ENCODE measurements at regions of chrX and their contacts with region 1.

Region 1: GRCh38 chrX:132488819-132489577 is at the start of gene MBNL3:
- DNase-seq: peak; percentile 35 to 78 (median 70)
- ATAC-seq: peak; percentile 77
- H3K4me3 ChIP-seq: peak within 1 kb of the TSS; percentile 82
- H3K4me3 Mint-ChIP-seq: peak within 1 kb of the TSS; percentile 93 to 99 (median 96)
- H3K27ac ChIP-seq: peak within 1 kb of the TSS; percentile 83
- H3K27ac Mint-ChIP-seq: peak within 1 kb of the TSS; percentile 78 to 98 (median 94)
- H3K4me1 ChIP-seq: peaks cover 4 to 15% of the 10 kb centered on the region in 2 donors
- H3K4me1 Mint-ChIP-seq: peaks cover 16 to 59% (median 44%) of the 10 kb centered on the region in 7 donors
- H3K27me3 ChIP-seq: no peaks in the 10 kb centered on the region
- H3K27me3 Mint-ChIP-seq: peaks cover 0 to 10% (median 0%) of the 10 kb centered on the region in 5 donors
- total RNA-seq, gene MBNL3: 20.8 to 34.0 (median 29.7) TPM

Region 2: DNA sequence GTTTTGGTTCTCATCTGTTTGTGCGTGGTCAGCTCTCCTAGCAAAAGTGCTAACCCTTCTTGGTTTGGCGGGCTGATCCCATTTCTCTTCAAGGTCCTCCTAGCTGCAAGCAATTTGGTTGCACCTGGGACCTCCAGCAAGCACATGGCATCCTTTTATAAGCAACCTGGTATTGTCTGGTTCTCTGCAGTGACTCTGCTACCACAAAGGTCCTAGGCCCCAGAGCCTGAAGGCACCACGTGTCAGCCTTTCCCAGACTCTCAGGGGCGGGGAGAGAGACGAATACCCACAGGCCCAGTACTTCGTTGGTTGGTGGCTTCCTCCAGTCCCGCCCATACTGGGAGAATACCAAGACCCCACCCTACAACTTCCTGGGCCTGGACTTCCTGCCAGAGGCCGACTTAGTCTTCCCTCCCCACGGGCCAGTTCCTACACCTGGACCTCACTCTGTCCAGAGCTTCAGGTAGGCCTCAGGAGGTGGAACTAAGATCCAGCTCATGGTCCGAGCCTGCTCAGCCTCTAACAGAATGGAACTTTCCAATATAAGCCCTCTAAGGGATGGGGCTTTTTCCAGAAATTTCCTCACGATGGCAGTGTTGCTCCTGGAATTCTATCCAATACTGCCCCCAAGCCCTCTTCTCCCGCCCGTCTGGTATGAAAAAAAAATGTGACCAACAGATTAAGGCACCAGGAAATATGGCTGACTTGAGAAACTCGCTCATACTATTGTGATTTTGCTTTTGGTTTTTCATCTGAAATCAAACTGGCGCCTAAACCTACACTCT is 658.4 kb before region 1 on chrX:
- CTCF ChIA-PET with region 1: interaction called, 3 read pairs
- POLR2A ChIA-PET with region 1: no interaction called
- intact Hi-C with region 1: loop called (anchors 2 to 5 kb)
- DNase-seq: peak in 8 of 9 donors; percentile 59 to 83 (median 72)
- ATAC-seq: peak; percentile 76
- H3K4me3 ChIP-seq: peak overlapping the region; percentile 37
- H3K4me3 Mint-ChIP-seq: peak overlapping the region; percentile 61 to 90 (median 72)
- H3K27ac ChIP-seq: peak overlapping the region; percentile 55
- H3K27ac Mint-ChIP-seq: peak overlapping the region; percentile 42 to 91 (median 81)
- H3K4me1 ChIP-seq: peaks cover 0 to 14% of the 10 kb centered on the region in 2 donors
- H3K4me1 Mint-ChIP-seq: peaks cover 1 to 44% (median 35%) of the 10 kb centered on the region in 7 donors
- H3K27me3 ChIP-seq: no peaks in the 10 kb centered on the region
- H3K27me3 Mint-ChIP-seq: no peaks in the 10 kb centered on the region

Region 3: DNA sequence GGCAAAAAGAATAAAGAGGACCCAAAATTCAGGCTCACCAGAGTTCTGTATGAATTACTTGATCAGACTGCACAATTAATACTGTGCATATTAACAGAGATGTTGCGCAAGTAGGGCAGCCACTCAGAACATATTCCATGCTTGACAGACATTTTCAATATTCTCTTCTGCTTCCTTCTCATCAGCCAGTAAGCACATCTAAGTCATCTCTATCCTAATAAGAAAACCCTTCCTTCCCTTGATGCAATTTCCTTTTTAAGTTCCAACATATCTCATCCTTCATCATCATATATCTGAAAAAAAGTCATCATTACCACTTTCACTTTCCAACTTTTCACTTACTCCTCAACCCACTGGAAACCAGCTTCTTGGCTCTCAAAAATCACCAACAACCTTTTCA is 14.5 kb before region 1 on chrX:
- CTCF ChIA-PET with region 1: interaction called, 3 read pairs
- POLR2A ChIA-PET with region 1: interaction called, 17 read pairs
- intact Hi-C with region 1: loop called in 1 of 2 experiments (anchors 2 kb)
- DNase-seq: no peak
- ATAC-seq: no peak
- H3K4me3 ChIP-seq: no peak overlapping the region
- H3K4me3 Mint-ChIP-seq: peak overlapping the region in 3 of 10 donors; percentile 32 to 56 (median 53)
- H3K27ac ChIP-seq: no peak overlapping the region
- H3K27ac Mint-ChIP-seq: peak overlapping the region in 2 of 9 donors; percentile 9 to 46
- H3K4me1 ChIP-seq: peaks cover 5 to 9% of the 10 kb centered on the region in 2 donors
- H3K4me1 Mint-ChIP-seq: peaks cover 14 to 31% (median 22%) of the 10 kb centered on the region in 7 donors
- H3K27me3 ChIP-seq: no peaks in the 10 kb centered on the region
- H3K27me3 Mint-ChIP-seq: no peaks in the 10 kb centered on the region

Region 4: GRCh38 chrX:132592880-132593279 is 103.9 kb after region 1 on chrX:
- CTCF ChIA-PET with region 1: no interaction called
- POLR2A ChIA-PET with region 1: no interaction called
- intact Hi-C with region 1: loop called in 1 of 2 experiments (anchors 5 kb)
- DNase-seq: peak in 3 of 9 donors; percentile 2 to 13 (median 2)
- ATAC-seq: no peak
- H3K4me3 ChIP-seq: no peak overlapping the region
- H3K4me3 Mint-ChIP-seq: no peak overlapping the region
- H3K27ac ChIP-seq: no peak overlapping the region
- H3K27ac Mint-ChIP-seq: no peak overlapping the region
- H3K4me1 ChIP-seq: no peaks in the 10 kb centered on the region
- H3K4me1 Mint-ChIP-seq: no peaks in the 10 kb centered on the region
- H3K27me3 ChIP-seq: no peaks in the 10 kb centered on the region
- H3K27me3 Mint-ChIP-seq: peaks cover 0 to 3% (median 0%) of the 10 kb centered on the region in 5 donors